Mammary epithelial cell (primary cell): ENCODE measurements at regions of chr15 and their contacts with region 1.

Region 1: DNA sequence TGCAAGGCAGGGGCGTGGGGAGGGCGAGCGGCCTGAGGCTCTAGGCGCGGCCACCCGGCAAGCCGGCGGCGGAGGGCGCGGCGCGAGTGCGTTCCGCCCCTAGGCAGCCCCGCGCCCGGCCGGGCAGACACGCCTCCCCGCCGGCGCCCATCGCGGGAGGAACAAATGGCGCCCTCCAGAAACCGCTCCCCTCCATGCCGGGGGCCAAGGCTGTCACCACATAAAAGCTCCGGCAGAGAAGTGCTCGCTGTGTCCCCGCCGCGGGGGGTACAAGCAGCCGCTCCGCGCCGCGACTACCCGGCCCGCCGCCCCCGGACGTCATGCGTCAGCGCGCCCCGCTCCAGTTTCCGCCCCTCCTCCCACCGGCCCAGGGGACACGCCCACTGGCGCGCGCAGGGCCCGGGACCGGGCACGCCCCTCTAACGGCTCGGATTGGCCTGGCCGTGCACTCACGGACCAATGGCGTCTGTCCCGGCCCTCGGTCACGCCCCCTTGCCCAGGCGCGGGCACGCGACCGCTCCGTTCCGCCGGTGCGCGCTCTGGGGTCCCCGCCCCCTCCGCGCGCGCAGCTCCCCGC is 391 bp upstream of the KLF13 start:
- DNase-seq: peak; percentile 98
- H3K4me3 ChIP-seq: peak overlapping the region; percentile 68 to 80 (median 77)
- H3K27ac ChIP-seq: peak overlapping the region; percentile 76
- H3K4me1 ChIP-seq: peaks cover 14% of the 10 kb centered on the region
- H3K27me3 ChIP-seq: no peaks in the 10 kb centered on the region
- CTCF ChIP-seq: no peak

Region 2: GRCh38 chr15:30670056-30670455 is 656.2 kb before region 1 on chr15:
- CTCF ChIA-PET with region 1: no interaction called
- dilution Hi-C with region 1: no loop called
- in situ Hi-C with region 1: no loop called
- intact Hi-C with region 1: loop called (anchors 10 kb)
- DNase-seq: no peak
- H3K4me3 ChIP-seq: no peak overlapping the region
- H3K27ac ChIP-seq: no peak overlapping the region
- H3K4me1 ChIP-seq: no peaks in the 10 kb centered on the region
- H3K27me3 ChIP-seq: no peaks in the 10 kb centered on the region
- CTCF ChIP-seq: no peak

Region 3: GRCh38 chr15:31200735-31201151 is 125.5 kb before region 1 on chr15:
- CTCF ChIA-PET with region 1: no interaction called
- dilution Hi-C with region 1: no loop called
- in situ Hi-C with region 1: no loop called
- intact Hi-C with region 1: loop called (anchors 1 kb)
- DNase-seq: peak; percentile 36
- H3K4me3 ChIP-seq: no peak overlapping the region
- H3K27ac ChIP-seq: no peak overlapping the region
- H3K4me1 ChIP-seq: no peaks in the 10 kb centered on the region
- H3K27me3 ChIP-seq: no peaks in the 10 kb centered on the region
- CTCF ChIP-seq: peak; percentile 44 to 80

Region 4: GRCh38 chr15:31338879-31339557 is 12.8 kb after region 1 on chr15:
- CTCF ChIA-PET with region 1: no interaction called
- dilution Hi-C with region 1: no loop called
- in situ Hi-C with region 1: no loop called
- intact Hi-C with region 1: loop called (anchors 1 kb)
- DNase-seq: peak; percentile 85
- H3K4me3 ChIP-seq: no peak overlapping the region
- H3K27ac ChIP-seq: peak overlapping the region; percentile 82
- H3K4me1 ChIP-seq: peaks cover 38% of the 10 kb centered on the region
- H3K27me3 ChIP-seq: no peaks in the 10 kb centered on the region
- CTCF ChIP-seq: no peak

Region 5: GRCh38 chr15:31349233-31350141 is 23.2 kb after region 1 on chr15:
- CTCF ChIA-PET with region 1: no interaction called
- dilution Hi-C with region 1: no loop called
- in situ Hi-C with region 1: no loop called
- intact Hi-C with region 1: loop called (anchors 1 kb)
- DNase-seq: no peak
- H3K4me3 ChIP-seq: no peak overlapping the region
- H3K27ac ChIP-seq: no peak overlapping the region
- H3K4me1 ChIP-seq: peaks cover 49% of the 10 kb centered on the region
- H3K27me3 ChIP-seq: no peaks in the 10 kb centered on the region
- CTCF ChIP-seq: no peak

Region 6: GRCh38 chr15:31391687-31392671 is 65.7 kb after region 1 on chr15:
- CTCF ChIA-PET with region 1: no interaction called
- dilution Hi-C with region 1: no loop called
- in situ Hi-C with region 1: no loop called
- intact Hi-C with region 1: loop called (anchors 5 kb)
- DNase-seq: peak; percentile 41
- H3K4me3 ChIP-seq: peak overlapping the region; percentile 63 to 79 (median 68)
- H3K27ac ChIP-seq: peak overlapping the region; percentile 12
- H3K4me1 ChIP-seq: peaks cover 30% of the 10 kb centered on the region
- H3K27me3 ChIP-seq: no peaks in the 10 kb centered on the region
- CTCF ChIP-seq: no peak

Region 7: DNA sequence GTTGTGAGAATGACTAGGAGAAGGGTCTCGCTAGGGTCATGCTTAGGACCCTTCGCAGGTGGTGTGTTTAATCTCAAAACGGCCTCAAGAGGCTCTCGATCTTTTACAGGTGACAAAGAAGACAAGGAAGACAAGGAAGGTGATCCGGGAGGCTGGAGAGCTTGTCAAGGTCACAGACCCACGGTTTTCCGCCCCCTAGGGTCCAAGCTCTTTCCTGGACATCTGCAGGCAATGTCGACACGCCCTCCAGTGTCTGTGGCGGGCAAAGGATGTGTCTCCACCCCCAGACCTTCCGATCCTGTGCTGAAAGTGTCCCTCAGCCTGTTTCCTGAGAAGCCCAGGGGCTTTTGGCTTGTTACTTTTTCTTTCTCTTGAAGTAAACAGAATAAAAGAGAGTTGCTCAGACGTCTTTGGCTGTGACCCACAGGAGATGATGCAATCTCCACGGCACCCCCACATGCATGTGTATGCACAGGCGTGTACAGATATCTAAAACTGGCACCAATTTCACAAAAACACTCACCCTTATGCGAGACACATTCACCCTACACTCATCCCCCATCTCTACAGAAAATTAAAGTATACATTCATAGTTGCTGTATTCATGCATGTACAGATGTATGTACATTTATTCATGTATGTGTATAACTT is 109.1 kb after region 1 on chr15:
- CTCF ChIA-PET with region 1: no interaction called
- dilution Hi-C with region 1: no loop called
- in situ Hi-C with region 1: no loop called
- intact Hi-C with region 1: loop called (anchors 2 kb)
- DNase-seq: peak; percentile 28
- H3K4me3 ChIP-seq: no peak overlapping the region
- H3K27ac ChIP-seq: no peak overlapping the region
- H3K4me1 ChIP-seq: peaks cover 17% of the 10 kb centered on the region
- H3K27me3 ChIP-seq: no peaks in the 10 kb centered on the region
- CTCF ChIP-seq: peak; percentile 48 to 75